Lower lobe of right lung (tissue), 2 donors: ENCODE measurements at regions of chr9 and their contacts with region 1.

Region 1: GRCh38 chr9:105168870-105169319 is 75.6 kb upstream of the SLC44A1 start:
- DNase-seq: no peak
- ATAC-seq: peak; percentile 44 to 67
- H3K4me3 ChIP-seq: no peak overlapping the region
- H3K27ac ChIP-seq: no peak overlapping the region
- H3K4me1 ChIP-seq: no peaks in the 10 kb centered on the region
- H3K27me3 ChIP-seq: no peaks in the 10 kb centered on the region
- CTCF ChIP-seq: no peak

Region 2: DNA sequence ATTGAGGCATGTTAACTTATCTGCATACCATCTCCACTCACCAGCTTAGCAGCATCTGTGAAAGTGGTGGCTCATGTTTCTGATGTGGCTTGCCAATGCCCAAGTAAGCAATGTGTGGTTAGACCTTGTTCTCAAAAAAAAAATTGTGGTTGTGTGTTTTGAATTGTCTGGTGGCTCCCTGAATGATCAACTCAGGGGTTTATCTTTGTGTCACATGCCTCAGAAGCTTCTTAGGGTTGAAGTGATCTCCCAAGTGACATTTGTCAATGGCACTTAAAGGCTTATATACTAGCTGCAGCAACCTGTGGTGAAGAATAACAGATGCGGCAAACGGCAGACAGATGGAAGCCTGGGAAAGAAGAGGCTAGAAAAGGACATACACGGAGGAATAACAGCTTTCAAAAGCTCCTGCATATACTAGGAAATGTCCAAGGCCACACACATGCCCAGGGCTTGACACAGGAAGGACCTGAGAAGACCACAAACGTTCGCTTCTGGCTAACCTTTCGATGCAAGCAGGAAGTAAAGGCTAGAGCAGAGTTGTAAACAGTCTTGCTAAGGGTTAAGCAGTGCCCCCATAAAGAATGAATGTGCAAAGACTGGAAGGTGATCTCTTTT is 236.7 kb after region 1 on chr9:
- intact Hi-C with region 1: loop called (anchors 10 kb)
- DNase-seq: no peak
- ATAC-seq: peak; percentile 30 to 31
- H3K4me3 ChIP-seq: no peak overlapping the region
- H3K27ac ChIP-seq: no peak overlapping the region
- H3K4me1 ChIP-seq: no peaks in the 10 kb centered on the region
- H3K27me3 ChIP-seq: no peaks in the 10 kb centered on the region
- CTCF ChIP-seq: no peak